Heart left ventricle (tissue), 16 donors: ENCODE measurements at regions of chr19 and their contacts with region 1.

Region 1: GRCh38 chr19:53195265-53195903 is 2.2 kb upstream of the ZNF665 start:
- DNase-seq: peak in 4 of 5 donors; percentile 68 to 79 (median 75)
- ATAC-seq: peak in 3 of 4 donors; percentile 47 to 60 (median 55)
- H3K4me3 ChIP-seq: no peak overlapping the region
- H3K27ac ChIP-seq: peak overlapping the region in 1 of 12 donors; percentile 0
- H3K4me1 ChIP-seq: peaks cover 0 to 33% (median 13%) of the 10 kb centered on the region in 12 donors
- H3K27me3 ChIP-seq: no peaks in the 10 kb centered on the region
- CTCF ChIP-seq: peak; percentile 74 to 95 (median 92)
- POLR2A ChIP-seq: no peak

Region 2: DNA sequence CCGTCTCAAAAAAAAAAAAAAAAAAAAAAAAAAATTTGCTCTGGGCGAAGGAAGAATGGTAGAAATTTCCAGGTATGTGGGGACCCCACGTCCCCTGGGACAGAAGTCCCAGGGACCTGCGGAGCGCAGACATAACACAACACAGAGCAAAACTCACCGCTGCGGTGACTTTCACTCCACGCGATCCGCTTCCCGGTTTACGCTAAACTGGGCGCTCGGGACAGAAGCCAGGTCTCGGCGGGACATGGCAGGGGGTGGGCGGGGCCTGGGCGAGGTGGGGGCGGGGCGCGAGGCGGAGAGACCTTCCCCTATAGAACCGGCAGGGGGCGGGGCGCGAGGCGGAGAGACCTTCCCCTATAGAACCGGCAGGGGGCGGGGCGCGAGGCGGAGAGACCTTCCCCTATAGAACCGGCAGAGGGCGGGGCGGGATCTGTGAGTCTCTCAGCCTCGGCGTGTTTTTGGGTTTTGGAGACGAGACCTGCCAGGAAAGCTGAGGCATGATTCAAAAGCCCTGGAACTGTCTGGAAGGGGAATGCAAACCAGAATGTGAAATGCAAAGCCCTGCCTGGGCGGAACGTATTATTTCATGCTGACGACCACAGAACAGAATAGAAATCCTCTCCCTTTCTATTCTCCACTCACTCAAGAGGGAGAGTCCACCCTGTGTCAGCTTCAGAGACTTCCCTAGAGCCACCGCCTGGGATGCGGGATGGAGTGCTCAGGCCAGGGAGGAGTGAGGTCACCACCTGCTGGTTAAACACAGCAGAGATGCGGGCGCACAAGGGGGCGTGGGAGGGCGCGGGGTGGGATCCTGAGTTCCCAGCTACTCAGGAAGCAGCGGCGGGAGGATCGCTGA is 201.8 kb before region 1 on chr19:
- intact Hi-C with region 1: loop called in 1 of 10 experiments (anchors 5 kb)
- DNase-seq: peak; percentile 76 to 88 (median 82)
- ATAC-seq: peak; percentile 81 to 96 (median 92)
- H3K4me3 ChIP-seq: peak overlapping the region; percentile 44 to 79 (median 61)
- H3K27ac ChIP-seq: peak overlapping the region in 11 of 12 donors; percentile 10 to 80 (median 62)
- H3K4me1 ChIP-seq: peaks cover 0 to 21% (median 7%) of the 10 kb centered on the region in 12 donors
- H3K27me3 ChIP-seq: peaks cover 0 to 4% (median 0%) of the 10 kb centered on the region in 9 donors
- CTCF ChIP-seq: peak; percentile 53 to 83 (median 76)
- POLR2A ChIP-seq: no peak

Region 3: DNA sequence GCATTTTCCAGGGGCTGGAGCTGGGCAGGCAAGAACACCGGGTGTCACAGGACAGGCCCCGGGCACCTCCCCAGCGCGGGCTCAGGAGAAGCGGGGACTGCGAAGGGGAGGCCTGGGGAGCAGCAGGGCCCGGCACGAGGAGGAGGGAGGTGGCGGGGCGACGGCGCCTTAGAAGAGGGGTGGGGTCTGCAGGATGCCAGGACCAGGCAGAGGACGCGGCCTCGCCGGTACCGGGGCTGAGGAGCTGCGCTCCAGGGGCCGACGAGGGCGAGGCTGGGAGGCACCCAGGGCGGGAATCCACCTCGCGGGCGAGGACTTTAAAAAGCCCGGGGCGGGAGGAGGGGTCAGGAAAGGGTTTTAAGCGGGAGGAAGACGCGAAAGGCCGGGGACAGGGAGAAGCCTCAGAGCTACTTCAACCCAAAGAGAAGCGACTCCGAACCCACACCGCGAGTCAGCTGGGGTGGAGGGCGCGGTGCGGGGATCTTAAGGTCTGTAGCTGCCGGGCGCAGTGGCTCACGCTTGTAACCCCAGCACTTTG is 37.2 kb before region 1 on chr19:
- intact Hi-C with region 1: loop called in 1 of 10 experiments (anchors 5 kb)
- DNase-seq: peak; percentile 31 to 64 (median 42)
- ATAC-seq: peak; percentile 18 to 57 (median 48)
- H3K4me3 ChIP-seq: peak overlapping the region; percentile 70 to 88 (median 74)
- H3K27ac ChIP-seq: peak overlapping the region; percentile 44 to 89 (median 82)
- H3K4me1 ChIP-seq: peaks cover 0 to 24% (median 11%) of the 10 kb centered on the region in 12 donors
- H3K27me3 ChIP-seq: no peaks in the 10 kb centered on the region
- CTCF ChIP-seq: no peak
- POLR2A ChIP-seq: no peak

Region 4: GRCh38 chr19:53333463-53334449 is 138.4 kb after region 1 on chr19 and contains the start of gene ZNF845:
- intact Hi-C with region 1: loop called in 2 of 10 experiments (anchors 5 to 10 kb)
- DNase-seq: peak; percentile 93 to 97 (median 96)
- ATAC-seq: peak; percentile 98 to 100 (median 100)
- H3K4me3 ChIP-seq: peak within 1 kb of the TSS; percentile 29 to 93 (median 76)
- H3K27ac ChIP-seq: peak within 1 kb of the TSS in 11 of 12 donors; percentile 60 to 81 (median 73)
- H3K4me1 ChIP-seq: peaks cover 0 to 19% (median 2%) of the 10 kb centered on the region in 12 donors
- H3K27me3 ChIP-seq: peaks cover 0 to 4% (median 0%) of the 10 kb centered on the region in 9 donors
- CTCF ChIP-seq: no peak
- POLR2A ChIP-seq: peak in 1 of 2 donors; percentile 74
- total RNA-seq, gene ZNF845: 2.7 to 5.7 (median 3.5) TPM

Region 5: DNA sequence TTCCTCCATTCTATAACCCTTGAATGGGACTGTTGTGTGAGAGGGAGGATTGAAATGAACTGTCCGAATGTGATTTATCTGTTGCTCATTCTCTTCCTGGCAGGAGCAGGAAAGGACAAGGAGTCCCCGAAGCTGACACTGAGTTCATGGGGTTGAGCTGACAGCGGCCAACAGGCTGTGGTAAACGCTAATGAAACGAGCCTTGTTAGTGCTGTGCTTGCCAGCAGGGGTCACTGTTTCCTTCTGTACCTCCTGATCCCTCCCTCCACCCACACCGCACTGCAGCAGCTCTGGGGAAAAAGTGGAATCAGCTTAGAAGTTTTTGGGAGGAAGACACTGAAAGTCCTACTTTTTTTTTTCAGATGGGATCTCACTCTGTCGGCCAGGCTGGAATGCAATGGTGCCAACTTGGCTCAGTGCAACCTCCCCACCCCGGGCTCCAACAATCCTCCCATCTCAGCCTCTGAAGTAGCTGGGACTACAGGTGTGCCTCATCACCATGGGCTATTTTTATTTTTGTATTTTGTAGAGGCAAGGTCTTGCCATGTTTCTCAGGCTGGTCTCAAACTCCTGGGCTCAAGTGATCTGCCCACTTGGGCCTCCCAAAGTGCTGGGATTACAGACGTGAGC is 229.7 kb after region 1 on chr19:
- intact Hi-C with region 1: loop called in 1 of 10 experiments (anchors 10 kb)
- DNase-seq: peak; percentile 72 to 76 (median 76)
- ATAC-seq: peak; percentile 70 to 94 (median 92)
- H3K4me3 ChIP-seq: no peak overlapping the region
- H3K27ac ChIP-seq: no peak overlapping the region
- H3K4me1 ChIP-seq: peaks cover 0 to 5% (median 2%) of the 10 kb centered on the region in 12 donors
- H3K27me3 ChIP-seq: no peaks in the 10 kb centered on the region
- CTCF ChIP-seq: peak; percentile 74 to 85 (median 80)
- POLR2A ChIP-seq: no peak

Region 6: GRCh38 chr19:53520550-53521372 is 325.4 kb after region 1 on chr19:
- intact Hi-C with region 1: loop called in 5 of 10 experiments (anchors 5 to 10 kb)
- DNase-seq: peak; percentile 97 to 99 (median 98)
- ATAC-seq: peak; percentile 98 to 99 (median 99)
- H3K4me3 ChIP-seq: peak overlapping the region; percentile 8 to 65 (median 58)
- H3K27ac ChIP-seq: peak overlapping the region; percentile 57 to 93 (median 86)
- H3K4me1 ChIP-seq: peaks cover 0 to 15% (median 10%) of the 10 kb centered on the region in 12 donors
- H3K27me3 ChIP-seq: no peaks in the 10 kb centered on the region
- CTCF ChIP-seq: no peak
- POLR2A ChIP-seq: peak in 1 of 2 donors; percentile 49